WTC11 (cell line): ENCODE measurements at regions of chrX and their contacts with region 1.

Region 1: DNA sequence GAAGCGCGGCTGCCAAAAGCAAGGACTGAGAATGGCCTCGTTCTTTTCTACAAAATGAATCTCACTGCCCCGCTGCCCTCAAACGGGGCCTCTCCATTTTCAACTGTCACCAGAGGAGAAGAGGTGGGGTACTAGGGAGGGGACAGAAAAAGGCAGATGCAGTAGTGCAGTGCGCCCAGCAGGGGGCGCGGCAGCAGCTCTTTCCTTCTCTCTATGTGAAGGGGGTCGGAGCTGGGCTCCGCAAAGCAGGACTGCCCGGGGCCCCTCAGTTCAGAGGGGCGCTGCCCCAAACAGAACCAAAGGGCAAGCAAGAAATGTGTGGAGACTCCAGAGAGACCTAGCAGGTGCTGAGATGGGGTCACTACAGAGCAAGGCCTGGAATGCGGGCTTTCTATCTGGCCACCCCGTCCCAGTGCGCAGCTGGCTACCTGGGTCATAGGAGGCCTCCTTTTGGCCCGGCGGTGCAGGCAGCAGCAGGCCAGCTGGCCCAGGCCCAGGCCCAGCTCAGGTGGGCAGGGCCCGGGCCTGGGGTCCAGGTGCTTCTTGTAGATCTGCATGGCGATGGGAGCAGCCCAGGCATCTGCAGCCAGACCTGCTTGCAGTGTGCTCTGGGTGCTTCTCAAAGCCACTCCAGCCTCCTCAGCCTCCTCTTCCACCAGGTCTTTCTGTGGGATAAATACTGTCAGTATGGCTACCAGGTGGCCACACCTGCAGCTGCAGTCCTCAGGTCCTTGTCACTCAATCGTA is 5.9 kb downstream of the IRAK1 start:
- DNase-seq: peak; percentile 55
- ATAC-seq: peak; percentile 76
- H3K4me3 Mint-ChIP-seq: no peak overlapping the region
- H3K27ac Mint-ChIP-seq: no peak overlapping the region
- H3K4me1 Mint-ChIP-seq: peaks cover 12% of the 10 kb centered on the region
- H3K27me3 Mint-ChIP-seq: no peaks in the 10 kb centered on the region
- CTCF ChIP-seq: peak; percentile 89

Region 2: GRCh38 chrX:153968754-153969124 is 45.0 kb before region 1 on chrX:
- CTCF ChIA-PET with region 1: interaction called, 12 read pairs
- POLR2A ChIA-PET with region 1: interaction called, 4 read pairs
- DNase-seq: no peak
- ATAC-seq: no peak
- H3K4me3 Mint-ChIP-seq: peak overlapping the region; percentile 100
- H3K27ac Mint-ChIP-seq: no peak overlapping the region
- H3K4me1 Mint-ChIP-seq: peaks cover 27% of the 10 kb centered on the region
- H3K27me3 Mint-ChIP-seq: no peaks in the 10 kb centered on the region
- CTCF ChIP-seq: no peak

Region 3: GRCh38 chrX:154046031-154046781 is 32.4 kb after region 1 on chrX:
- CTCF ChIA-PET with region 1: interaction called, 14 read pairs
- POLR2A ChIA-PET with region 1: no interaction called
- DNase-seq: no peak
- ATAC-seq: no peak
- H3K4me3 Mint-ChIP-seq: no peak overlapping the region
- H3K27ac Mint-ChIP-seq: peak overlapping the region; percentile 46
- H3K4me1 Mint-ChIP-seq: peaks cover 55% of the 10 kb centered on the region
- H3K27me3 Mint-ChIP-seq: no peaks in the 10 kb centered on the region; the same call in 1 of the 2 replicates
- CTCF ChIP-seq: no peak